MCF 10A (cell line): ENCODE measurements at regions of chr10 and their contacts with region 1.

Region 1: GRCh38 chr10:49131507-49132361 is 2.1 kb downstream of the FAM170B start:
- DNase-seq: no peak
- H3K4me3 Mint-ChIP-seq: no peak overlapping the region
- H3K27ac Mint-ChIP-seq: no peak overlapping the region
- H3K4me1 Mint-ChIP-seq: no peaks in the 10 kb centered on the region
- H3K27me3 Mint-ChIP-seq: peaks cover 45% of the 10 kb centered on the region
- CTCF ChIP-seq: no peak

Region 2: DNA sequence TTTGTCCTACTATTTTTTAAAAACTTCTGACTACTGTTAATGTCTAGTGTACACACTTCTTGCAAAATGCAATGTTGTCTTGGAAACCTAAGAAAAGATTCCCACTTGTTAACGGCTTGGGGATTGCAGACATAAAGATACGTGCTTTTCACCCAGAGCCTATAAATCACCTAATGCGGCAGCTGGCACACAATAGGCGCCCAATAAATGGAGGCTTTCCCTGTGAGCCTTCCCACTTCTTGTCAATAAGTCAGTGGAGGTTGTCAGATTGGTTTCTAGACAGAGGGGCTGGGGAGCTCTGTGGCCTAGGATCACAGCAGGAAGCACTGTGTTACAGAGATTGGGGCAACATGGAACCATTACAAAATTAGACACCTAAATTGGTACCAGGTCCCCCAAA is 91.1 kb before region 1 on chr10:
- CTCF ChIA-PET with region 1: interaction called, 3 read pairs
- POLR2A ChIA-PET with region 1: no interaction called
- intact Hi-C with region 1: loop called (anchors 5 kb)
- DNase-seq: no peak
- H3K4me3 Mint-ChIP-seq: no peak overlapping the region
- H3K27ac Mint-ChIP-seq: no peak overlapping the region
- H3K4me1 Mint-ChIP-seq: no peaks in the 10 kb centered on the region
- H3K27me3 Mint-ChIP-seq: peaks cover 35% of the 10 kb centered on the region
- CTCF ChIP-seq: no peak